ENCODE measurements at regions of chr11 and their contacts with region 1.

Region 1: DNA sequence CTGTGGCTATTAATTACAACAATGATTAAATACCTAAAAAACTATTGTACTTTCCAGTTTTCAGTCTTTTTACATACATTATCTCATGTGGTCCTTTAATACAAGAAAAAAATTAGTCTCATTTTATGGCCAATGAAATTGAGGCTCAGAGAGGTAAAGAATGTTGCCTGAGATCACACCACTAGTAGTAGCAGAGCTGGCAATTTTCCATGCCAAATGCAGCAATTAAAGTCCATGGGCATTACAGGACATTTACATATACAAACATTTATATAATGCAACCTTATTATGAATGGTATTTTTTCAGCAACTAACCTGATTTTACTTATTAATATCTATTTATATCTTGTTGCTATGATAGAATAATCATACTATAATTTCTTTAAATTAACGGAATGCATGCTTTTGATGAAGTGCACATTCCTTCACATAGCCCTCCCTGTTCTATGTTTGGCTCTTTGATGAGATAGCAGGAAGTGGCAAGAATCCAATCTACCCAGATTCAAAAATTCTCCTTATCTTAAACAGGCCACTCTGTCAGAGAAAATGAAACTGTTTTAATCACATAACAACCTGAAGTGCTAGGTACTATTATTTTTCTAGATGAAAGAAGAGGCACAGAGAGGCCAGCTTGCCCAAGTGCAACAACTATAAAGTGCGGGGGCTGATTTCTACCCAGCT is 120.9 kb upstream of the LDLRAD3 start:
- DNase-seq: no peak
- ATAC-seq: no peak
- H3K4me3 Mint-ChIP-seq: no peak overlapping the region
- H3K27ac Mint-ChIP-seq: no peak overlapping the region
- H3K4me1 Mint-ChIP-seq: peaks cover 15% of the 10 kb centered on the region
- H3K27me3 Mint-ChIP-seq: peaks cover 8% of the 10 kb centered on the region; the same call in 1 of the 2 replicates
- CTCF ChIP-seq: no peak

Region 2: DNA sequence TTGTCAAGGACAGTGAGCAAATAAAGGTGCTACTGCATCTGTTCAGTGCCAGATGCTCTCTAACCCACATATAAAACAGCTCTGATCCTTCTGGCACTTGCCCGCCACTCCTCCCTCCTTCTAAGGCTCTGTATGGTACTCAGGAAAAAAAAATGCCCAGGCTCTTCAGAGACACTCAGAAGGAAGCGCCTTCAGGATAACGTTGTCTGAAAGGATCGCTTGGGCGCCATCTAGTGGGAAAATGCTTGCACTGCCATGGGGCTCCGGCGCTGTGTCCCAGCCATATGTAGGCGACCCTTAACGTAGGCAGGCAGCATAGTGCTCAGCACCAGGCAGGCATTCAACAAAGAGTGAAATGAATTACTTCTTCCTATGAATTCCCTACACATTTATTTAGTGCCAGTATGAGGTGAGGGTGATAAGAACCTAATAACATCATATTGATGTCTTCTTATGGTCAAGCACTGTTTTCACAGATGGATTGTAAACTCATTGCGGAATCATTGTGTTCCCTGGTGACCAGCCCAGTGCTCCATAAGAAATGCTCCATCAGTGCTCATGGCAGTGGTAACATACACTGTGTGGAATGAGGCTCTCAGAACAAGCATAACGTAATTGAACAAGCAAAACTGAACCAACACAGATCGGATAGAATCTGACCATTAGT is 337.2 kb before region 1 on chr11:
- CTCF ChIA-PET with region 1: interaction called, 41 read pairs
- POLR2A ChIA-PET with region 1: no interaction called
- DNase-seq: peak; percentile 93
- ATAC-seq: peak; percentile 98
- H3K4me3 Mint-ChIP-seq: no peak overlapping the region
- H3K27ac Mint-ChIP-seq: no peak overlapping the region
- H3K4me1 Mint-ChIP-seq: no peaks in the 10 kb centered on the region
- H3K27me3 Mint-ChIP-seq: peaks cover 12% of the 10 kb centered on the region; the same call in 1 of the 2 replicates
- CTCF ChIP-seq: peak; percentile 82

Region 3: DNA sequence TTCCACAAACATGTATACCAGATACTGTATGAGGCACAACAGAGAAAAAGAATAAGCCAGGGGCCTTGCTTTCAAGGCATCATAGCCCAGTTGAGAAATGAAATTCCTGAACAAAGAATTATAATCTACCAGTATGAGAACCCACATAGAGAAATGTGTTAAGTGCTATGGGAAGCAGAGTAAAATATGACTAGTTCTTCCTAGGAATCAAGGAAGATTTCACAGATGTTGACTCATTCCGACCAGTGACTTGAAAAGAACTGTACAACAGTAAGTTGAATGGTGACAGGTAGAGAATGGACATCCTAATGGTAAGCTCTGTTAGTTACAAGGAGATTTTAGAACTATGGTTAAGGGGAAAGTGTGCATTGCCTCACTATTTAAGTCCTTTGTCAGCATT is 57.7 kb before region 1 on chr11:
- CTCF ChIA-PET with region 1: interaction called, 13 read pairs
- POLR2A ChIA-PET with region 1: no interaction called
- DNase-seq: no peak
- ATAC-seq: no peak
- H3K4me3 Mint-ChIP-seq: no peak overlapping the region
- H3K27ac Mint-ChIP-seq: no peak overlapping the region
- H3K4me1 Mint-ChIP-seq: peaks cover 9% of the 10 kb centered on the region
- H3K27me3 Mint-ChIP-seq: no peaks in the 10 kb centered on the region
- CTCF ChIP-seq: no peak

Region 4: DNA sequence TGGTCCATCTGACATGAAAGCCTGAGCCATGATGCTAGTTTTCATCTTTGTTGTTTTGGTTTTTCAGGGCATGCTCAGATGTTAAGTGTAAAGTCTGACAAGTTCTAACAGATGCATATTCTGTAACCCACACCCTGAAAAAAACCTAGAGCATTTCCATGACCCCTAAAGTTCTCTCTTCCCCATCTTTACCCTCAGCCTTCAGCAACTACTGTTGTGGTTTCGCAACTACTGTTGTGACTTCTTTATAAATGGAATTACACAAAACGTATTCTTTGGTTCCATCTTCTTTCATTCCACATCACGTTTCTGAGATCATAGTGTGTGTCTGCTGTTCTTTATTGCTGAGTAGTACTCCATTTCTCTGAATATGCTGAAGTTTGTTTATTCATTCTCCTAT is 55.8 kb after region 1 on chr11:
- CTCF ChIA-PET with region 1: interaction called, 15 read pairs
- POLR2A ChIA-PET with region 1: no interaction called
- DNase-seq: no peak
- ATAC-seq: no peak
- H3K4me3 Mint-ChIP-seq: no peak overlapping the region
- H3K27ac Mint-ChIP-seq: no peak overlapping the region
- H3K4me1 Mint-ChIP-seq: peaks cover 3% of the 10 kb centered on the region; the same call in 1 of the 2 replicates
- H3K27me3 Mint-ChIP-seq: peaks cover 2% of the 10 kb centered on the region; the same call in 1 of the 2 replicates
- CTCF ChIP-seq: no peak

Region 5: DNA sequence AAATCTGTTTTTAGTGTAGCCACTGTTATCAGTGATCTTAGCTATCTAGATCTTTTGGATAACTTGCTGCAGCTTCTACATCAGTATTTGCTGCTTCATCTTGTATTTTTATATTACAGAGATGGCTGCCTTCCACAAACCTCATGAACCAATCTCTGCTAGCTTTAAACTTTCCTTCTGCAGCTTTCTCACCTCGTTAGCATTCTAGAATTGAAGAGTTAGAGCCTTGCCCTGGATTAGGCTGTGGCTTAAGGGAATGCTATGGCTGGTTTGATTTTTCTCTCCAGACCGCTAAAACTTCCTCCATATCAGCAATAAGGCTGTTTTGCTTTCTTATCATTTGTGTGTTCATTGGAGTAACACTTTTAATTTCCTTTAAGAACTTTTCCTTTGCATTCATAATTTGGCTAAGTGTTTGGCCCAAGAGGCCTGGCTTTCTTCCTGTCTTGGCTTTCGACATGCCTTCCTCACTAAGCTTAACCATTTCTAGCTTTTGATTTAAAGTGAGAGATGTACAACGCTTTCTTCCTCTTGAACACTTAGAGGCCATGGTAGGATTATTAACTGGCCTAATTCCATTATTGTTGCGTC is 172.8 kb after region 1 on chr11:
- CTCF ChIA-PET with region 1: interaction called, 25 read pairs
- POLR2A ChIA-PET with region 1: no interaction called
- DNase-seq: no peak
- ATAC-seq: no peak
- H3K4me3 Mint-ChIP-seq: no peak overlapping the region
- H3K27ac Mint-ChIP-seq: no peak overlapping the region
- H3K4me1 Mint-ChIP-seq: peaks cover 50% of the 10 kb centered on the region
- H3K27me3 Mint-ChIP-seq: no peaks in the 10 kb centered on the region
- CTCF ChIP-seq: no peak

Region 6: GRCh38 chr11:36091256-36091811 is 268.4 kb after region 1 on chr11:
- CTCF ChIA-PET with region 1: interaction called, 25 read pairs
- POLR2A ChIA-PET with region 1: no interaction called
- DNase-seq: no peak
- ATAC-seq: no peak
- H3K4me3 Mint-ChIP-seq: no peak overlapping the region
- H3K27ac Mint-ChIP-seq: peak overlapping the region; percentile 90
- H3K4me1 Mint-ChIP-seq: peaks cover 65% of the 10 kb centered on the region
- H3K27me3 Mint-ChIP-seq: no peaks in the 10 kb centered on the region; the same call in 1 of the 2 replicates
- CTCF ChIP-seq: no peak

Region 7: GRCh38 chr11:36240801-36241200 is 417.8 kb after region 1 on chr11:
- CTCF ChIA-PET with region 1: interaction called, 10 read pairs
- POLR2A ChIA-PET with region 1: no interaction called
- DNase-seq: no peak
- ATAC-seq: no peak
- H3K4me3 Mint-ChIP-seq: no peak overlapping the region
- H3K27ac Mint-ChIP-seq: no peak overlapping the region
- H3K4me1 Mint-ChIP-seq: peaks cover 6% of the 10 kb centered on the region; the same call in 1 of the 2 replicates
- H3K27me3 Mint-ChIP-seq: peaks cover 3% of the 10 kb centered on the region; the same call in 1 of the 2 replicates
- CTCF ChIP-seq: no peak